ENCODE measurements at regions of chr11 and their contacts with region 1.

Region 1: GRCh38 chr11:65121865-65122581 is at the starts of genes FAU and MRPL49:
- DNase-seq: peak; percentile 93 to 100 (median 99)
- ATAC-seq: peak; percentile 81 to 84 (median 82)
- H3K4me3 ChIP-seq: peak within 1 kb of the TSS; percentile 80 to 91
- H3K4me3 Mint-ChIP-seq: peak within 1 kb of the TSS; percentile 96 to 100 (median 96)
- H3K27ac ChIP-seq: peak within 1 kb of the TSS; percentile 92
- H3K27ac Mint-ChIP-seq: peak within 1 kb of the TSS; percentile 98 to 100
- H3K4me1 ChIP-seq: peaks cover 9 to 34% of the 10 kb centered on the region in 2 experiments
- H3K4me1 Mint-ChIP-seq: peaks cover 43 to 57% (median 48%) of the 10 kb centered on the region in 3 donors
- H3K27me3 ChIP-seq: no peaks in the 10 kb centered on the region
- H3K27me3 Mint-ChIP-seq: no peaks in the 10 kb centered on the region
- total RNA-seq, gene FAU: 1,477 to 1,924 (median 1,724) TPM
- total RNA-seq, gene MRPL49: 48.3 to 58.8 (median 55.1) TPM

Region 2: GRCh38 chr11:65110354-65110861 is 11.6 kb before region 1 on chr11:
- CTCF ChIA-PET with region 1: interaction called in 1 of 2 experiments, 13 read pairs
- POLR2A ChIA-PET with region 1: interaction called, 5 to 7 read pairs
- DNase-seq: peak; percentile 82 to 98 (median 94)
- ATAC-seq: peak; percentile 32 to 56 (median 42)
- H3K4me3 ChIP-seq: no peak overlapping the region
- H3K4me3 Mint-ChIP-seq: peak overlapping the region in 2 of 3 donors; percentile 37 to 100
- H3K27ac ChIP-seq: peak overlapping the region; percentile 67
- H3K27ac Mint-ChIP-seq: peak overlapping the region; percentile 83 to 88
- H3K4me1 ChIP-seq: peaks cover 10 to 51% of the 10 kb centered on the region in 2 experiments
- H3K4me1 Mint-ChIP-seq: peaks cover 41 to 44% (median 44%) of the 10 kb centered on the region in 3 donors
- H3K27me3 ChIP-seq: no peaks in the 10 kb centered on the region
- H3K27me3 Mint-ChIP-seq: no peaks in the 10 kb centered on the region

Region 3: DNA sequence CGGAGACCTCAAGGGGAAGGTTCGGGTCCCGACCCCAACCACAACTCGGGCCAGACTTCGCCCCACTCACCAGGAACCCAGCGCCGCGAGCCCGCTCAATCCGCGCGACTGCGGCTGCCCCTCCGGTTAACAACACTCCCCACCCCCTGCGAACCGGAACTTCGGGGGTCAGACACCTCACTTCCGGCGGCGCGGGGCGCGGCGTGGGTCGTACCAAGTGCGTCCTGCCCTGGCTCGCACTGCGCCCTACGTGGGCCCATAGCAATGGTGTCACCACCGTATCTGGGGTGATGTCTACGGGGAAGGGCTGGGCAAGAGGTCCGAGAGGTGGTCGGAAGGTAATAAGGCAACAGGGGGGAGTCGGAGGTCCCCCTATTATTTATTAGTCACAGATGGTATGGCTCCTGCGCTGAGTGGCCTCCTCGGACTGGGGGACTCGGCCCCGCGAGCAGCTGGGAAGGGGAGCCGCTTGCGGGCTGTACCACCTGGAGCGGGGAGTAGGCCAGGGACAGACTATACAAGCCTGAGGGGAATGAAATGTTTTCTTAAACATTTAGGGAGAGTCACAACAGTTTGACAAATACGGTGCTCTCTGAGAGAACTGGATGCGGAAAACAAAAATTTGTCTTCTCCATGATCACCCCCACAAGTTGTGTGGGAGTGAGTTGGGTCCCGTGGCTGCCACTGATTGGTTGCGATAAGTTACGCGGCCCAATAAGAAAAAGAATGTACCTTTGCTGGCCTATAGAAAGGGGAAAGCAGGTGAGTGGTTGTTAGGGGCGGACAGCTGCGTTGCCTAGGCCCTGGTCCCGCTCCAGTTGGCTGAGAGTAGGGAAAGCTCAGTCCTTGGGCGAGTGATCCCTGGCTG is 12.6 kb after region 1 on chr11 and contains the start of gene SYVN1:
- CTCF ChIA-PET with region 1: interaction called in 1 of 2 experiments, 11 read pairs
- POLR2A ChIA-PET with region 1: interaction called, 8 to 12 read pairs
- DNase-seq: peak; percentile 84 to 95 (median 89)
- ATAC-seq: peak; percentile 87 to 91 (median 89)
- H3K4me3 ChIP-seq: peak within 1 kb of the TSS; percentile 80 to 94
- H3K4me3 Mint-ChIP-seq: peak within 1 kb of the TSS; percentile 98 to 99 (median 99)
- H3K27ac ChIP-seq: peak within 1 kb of the TSS; percentile 96
- H3K27ac Mint-ChIP-seq: peak within 1 kb of the TSS; percentile 97 to 100
- H3K4me1 ChIP-seq: peaks cover 24 to 40% of the 10 kb centered on the region in 2 experiments
- H3K4me1 Mint-ChIP-seq: peaks cover 40 to 53% (median 41%) of the 10 kb centered on the region in 3 donors
- H3K27me3 ChIP-seq: no peaks in the 10 kb centered on the region
- H3K27me3 Mint-ChIP-seq: no peaks in the 10 kb centered on the region
- total RNA-seq, gene SYVN1: 63.8 to 77.7 (median 68.8) TPM